Head of caudate nucleus (tissue), 42 donors: ENCODE measurements at regions of chr9 and their contacts with region 1.

Region 1: DNA sequence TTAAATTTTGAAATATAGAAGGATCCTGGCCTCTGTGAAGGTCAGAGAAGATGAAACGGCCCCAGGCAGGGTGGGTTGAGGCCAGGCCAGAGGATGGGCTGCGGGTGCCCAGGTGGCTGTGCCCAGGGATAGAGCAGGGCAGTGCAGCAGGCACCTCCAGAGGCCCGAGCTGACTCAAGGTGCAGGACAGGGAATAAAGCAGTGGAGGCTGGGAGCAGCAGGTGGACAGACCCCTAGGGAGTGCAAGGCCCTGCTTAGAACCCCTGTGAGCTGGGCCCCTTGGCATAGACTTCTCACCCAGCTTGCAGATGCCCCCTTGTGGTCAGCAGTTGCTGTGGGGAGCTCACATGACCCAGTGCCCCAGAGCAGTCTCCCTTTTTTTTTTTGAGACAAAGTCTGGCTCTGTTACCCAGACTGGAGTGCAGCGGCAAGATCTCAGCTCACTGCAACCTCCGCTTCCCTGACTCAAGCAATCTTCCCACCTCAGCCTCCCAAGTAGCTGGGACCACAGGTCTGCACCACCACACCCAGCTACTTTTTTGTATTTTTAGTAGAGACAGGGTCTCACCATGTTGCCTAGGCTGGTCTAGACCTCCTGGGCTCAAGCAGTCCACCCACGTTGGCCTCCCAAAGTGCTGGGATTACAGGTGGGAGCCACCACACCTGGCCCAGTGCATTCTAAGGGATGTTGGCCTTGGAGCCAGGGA is 118.8 kb downstream of the WNK2 start:
- DNase-seq: peak in 33 of 42 donors; percentile 24 to 76 (median 47)

Region 2: DNA sequence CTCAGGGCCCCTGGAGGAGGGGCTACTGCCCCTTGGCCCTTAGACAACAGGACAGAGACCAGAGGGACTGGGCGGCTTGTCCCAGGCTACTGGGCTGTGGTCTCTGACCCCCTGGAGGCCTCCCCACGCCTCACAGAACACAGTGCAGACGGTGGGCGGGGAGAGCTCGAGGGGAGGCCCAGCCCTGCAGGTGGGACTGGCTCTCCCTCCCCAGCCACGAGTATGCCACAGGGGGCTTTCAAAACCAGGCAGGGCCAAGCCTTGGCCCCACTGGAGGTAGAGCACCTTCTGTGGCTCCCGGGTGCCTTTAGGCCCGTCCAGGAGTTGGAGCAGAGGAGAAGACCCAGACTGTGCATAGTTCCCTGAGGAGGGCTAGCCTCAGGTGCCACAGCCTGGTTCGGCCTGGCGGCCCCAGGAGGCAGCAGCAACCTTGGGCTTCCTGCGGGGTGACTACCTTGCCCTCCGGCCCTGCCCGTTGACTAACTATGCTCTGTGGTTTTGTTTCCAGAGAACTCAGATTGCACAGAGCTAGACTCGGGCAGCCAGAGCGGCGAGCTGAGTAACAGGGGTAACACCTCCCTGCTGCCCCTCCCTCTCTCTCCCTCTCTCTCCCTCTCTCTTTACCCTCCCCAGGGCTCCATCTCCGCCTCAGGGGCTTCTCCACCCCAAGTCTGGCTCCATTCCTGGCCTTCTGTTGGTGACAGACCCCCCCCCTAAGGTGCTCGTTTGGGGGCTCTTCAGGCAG is 191.2 kb before region 1 on chr9:
- intact Hi-C with region 1: loop called (anchors 5 kb)
- DNase-seq: peak in 6 of 42 donors; percentile 3 to 12 (median 8)

Region 3: DNA sequence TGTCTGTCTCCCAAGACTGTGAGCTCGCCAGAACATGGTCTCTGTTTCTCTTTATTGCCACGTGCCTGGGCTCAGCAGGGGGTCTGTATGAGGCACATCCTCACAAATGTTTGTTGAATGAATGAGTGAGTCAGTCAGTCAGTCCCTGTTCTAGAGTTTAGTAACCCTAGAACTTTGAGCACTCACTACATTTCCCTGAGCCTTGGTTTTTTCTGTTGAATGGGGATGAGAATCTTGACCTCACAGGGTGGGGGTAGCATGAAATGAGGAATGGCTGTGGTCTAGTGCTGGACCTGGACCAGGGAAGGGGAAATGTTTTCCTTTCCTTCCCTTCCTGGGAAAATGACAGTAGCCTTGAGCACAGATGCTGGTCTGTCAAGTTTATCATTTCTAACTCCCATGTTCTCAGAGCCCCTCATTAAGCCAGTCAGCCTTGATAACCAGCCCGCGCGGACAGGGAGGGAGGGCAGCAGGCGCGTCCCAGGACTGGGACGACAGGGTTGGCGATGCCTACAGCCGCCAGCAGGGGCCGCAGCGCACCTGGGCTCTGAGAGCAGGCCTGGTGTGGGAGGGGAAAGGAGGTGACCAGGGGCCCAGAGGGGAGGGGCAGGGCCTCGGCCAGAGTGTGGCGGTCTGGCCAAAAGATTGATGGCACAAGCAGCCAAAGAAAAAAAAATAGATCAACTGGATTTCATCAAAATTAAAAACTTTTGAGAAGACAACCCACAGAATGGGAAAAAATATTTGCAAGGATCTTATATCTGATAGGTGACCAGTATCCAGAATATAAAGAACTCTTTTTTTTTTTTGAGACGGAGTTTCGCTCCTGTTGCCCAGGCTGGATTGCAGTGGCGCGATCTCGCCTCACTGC is 142.9 kb before region 1 on chr9:
- intact Hi-C with region 1: loop called (anchors 10 kb)
- DNase-seq: peak; percentile 66 to 91 (median 84)

Region 4: DNA sequence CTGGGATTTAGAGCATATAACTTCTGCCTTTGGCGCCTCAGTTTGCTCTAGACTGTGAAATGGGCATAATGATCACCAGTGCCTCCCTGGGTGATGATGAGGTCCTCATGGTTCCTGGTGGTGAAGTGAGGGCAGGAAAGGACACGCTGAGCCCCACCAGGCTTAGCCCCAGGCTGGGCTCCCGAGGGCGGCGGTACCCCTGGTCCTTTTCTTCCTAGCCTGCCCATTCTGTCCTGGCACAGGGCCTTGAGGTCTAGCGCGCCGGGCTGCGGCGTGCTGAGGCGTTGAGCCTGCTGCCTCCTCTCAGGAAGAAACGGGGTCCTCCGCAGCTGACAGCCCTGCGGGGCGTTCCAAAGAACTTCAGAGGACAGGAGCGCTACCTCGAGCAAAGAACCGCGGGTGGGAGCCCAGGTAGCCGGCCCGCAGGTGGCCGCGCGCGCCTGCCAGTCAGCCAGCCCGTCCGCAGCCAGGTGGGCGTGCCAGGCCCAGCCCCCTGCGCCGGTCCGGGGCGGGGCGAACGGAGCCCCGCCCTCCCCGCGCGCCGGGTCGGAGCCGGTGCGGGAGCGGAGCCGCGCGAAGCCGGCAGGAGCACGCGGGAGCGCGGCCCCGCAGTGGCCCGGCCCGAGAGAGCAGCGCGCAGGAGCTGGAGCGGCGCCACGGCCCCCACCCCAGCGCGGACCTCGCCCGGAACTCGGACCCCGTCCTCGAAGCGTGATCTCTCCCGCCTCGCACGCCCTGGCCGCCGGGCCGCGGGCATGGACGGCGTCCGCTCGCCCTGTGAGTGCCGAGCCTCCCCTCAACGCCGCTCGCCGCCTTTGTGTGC is 118.9 kb before region 1 on chr9 and contains the start of gene WNK2:
- intact Hi-C with region 1: loop called (anchors 10 kb)
- DNase-seq: peak in 31 of 42 donors; percentile 19 to 78 (median 61)